AG04449 (cell line): ENCODE measurements at regions of chr19 and their contacts with region 1.

Region 1: DNA sequence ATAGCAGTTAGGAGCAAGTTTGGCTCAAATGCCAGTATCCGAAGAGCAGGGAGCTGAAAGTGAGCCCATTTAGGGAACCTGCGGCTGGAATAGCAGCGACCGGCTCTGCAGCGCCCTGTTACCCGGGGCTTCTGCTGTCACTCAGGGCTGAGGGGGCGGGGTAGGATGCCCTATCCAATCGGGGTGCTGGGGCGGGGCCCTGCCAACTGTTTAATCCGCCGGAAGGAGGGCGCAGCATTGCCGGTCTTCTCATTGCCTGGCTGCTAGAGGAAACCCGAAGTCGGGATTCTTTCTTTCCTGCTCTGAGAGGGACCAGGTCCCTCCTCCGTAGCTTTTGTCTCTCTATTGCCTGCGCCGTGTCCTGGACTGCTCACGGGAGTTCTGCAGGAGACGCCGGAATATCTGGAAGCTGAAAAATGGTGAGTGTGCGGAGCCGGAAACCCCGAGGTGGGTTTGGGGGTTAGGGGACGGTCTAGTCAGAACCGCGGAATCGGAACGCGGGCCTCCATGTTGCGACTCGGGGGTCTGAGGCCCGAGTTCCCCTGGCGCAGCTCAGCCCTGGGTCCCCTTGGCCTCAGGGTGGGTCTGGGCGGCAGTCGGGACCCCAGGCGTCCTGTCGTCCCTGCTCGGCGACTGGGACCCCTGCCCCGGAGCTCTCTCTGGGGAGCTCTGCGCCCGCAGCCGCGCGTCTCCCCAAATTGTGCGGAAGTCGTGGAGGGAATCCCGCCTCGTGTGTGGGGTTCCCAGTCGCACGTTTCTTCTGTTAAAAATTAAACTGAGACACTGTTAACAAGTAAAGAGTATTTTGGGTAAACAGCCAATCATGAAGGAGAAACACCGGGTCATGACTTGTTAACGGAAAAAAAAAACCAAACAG is 22.8 kb downstream of the ZNF763 start:
- DNase-seq: no peak
- H3K4me3 ChIP-seq: peak overlapping the region; percentile 92
- CTCF ChIP-seq: no peak

Region 2: DNA sequence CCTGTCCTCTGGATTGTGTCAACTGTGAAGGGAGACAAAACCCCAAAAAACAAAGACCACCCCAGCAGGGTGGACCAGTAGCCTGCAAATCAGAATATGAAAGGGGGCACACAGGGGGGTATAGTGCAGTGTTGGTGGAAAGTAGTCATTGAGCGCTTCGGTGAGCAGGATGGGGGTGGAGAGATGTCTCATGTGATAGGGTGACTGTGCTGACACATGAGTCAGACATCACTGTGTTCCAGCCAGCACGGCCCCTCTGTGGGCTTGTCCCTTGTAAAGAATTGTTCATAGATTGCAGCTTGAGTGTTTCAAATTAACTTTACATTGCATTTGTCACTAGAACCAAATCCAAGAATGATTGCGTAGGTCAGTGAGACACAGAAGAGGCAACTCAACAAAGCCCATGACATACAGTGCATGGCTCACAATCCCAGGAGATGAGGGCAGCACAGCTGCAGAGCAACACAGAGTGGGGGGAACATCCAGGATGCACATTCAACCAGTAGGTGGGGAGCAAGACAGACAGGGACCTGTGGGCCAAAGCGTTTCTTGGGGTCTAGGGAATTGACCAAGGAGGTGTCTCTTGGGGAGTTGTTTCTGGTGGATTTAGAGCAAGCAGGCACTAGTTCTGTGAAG is 166.1 kb before region 1 on chr19:
- CTCF ChIA-PET with region 1: no interaction called
- POLR2A ChIA-PET with region 1: no interaction called
- DNase-seq: no peak
- H3K4me3 ChIP-seq: no peak overlapping the region
- CTCF ChIP-seq: no peak

Region 3: DNA sequence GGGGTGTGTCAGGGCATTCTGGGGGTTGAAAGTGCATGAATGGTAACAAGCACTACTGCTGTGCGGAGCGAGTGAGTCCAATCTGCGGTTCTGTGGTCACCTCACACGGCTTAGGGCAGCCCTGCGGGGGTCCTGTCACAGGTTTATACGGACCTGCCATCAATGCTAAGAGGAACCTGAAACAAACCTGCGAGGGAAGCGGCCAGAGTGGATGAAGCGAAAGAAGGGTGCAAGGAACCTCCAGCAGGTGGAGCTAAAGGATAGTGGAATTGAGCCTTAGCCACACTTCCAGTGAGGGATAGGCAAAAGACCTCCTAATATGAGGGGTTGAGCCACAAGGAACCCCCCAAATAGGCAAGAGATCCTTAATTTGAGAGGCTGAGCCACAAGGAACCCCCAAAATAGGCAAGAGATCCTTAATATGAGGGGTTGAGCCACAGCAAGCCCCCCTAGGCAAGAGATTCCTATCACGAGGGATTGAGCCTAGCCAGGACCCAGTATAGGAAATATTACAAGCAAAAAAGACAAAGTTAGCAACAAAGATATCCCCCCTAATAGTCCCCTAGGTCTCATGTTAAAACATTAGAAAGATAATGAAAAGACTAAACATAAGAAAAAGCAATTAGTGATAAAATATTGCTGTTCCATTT is 106.4 kb before region 1 on chr19:
- CTCF ChIA-PET with region 1: interaction called, 79 read pairs
- POLR2A ChIA-PET with region 1: no interaction called
- DNase-seq: no peak
- H3K4me3 ChIP-seq: peak overlapping the region; percentile 15; the same call in 1 of the 2 replicates
- CTCF ChIP-seq: peak; percentile 72

Region 4: DNA sequence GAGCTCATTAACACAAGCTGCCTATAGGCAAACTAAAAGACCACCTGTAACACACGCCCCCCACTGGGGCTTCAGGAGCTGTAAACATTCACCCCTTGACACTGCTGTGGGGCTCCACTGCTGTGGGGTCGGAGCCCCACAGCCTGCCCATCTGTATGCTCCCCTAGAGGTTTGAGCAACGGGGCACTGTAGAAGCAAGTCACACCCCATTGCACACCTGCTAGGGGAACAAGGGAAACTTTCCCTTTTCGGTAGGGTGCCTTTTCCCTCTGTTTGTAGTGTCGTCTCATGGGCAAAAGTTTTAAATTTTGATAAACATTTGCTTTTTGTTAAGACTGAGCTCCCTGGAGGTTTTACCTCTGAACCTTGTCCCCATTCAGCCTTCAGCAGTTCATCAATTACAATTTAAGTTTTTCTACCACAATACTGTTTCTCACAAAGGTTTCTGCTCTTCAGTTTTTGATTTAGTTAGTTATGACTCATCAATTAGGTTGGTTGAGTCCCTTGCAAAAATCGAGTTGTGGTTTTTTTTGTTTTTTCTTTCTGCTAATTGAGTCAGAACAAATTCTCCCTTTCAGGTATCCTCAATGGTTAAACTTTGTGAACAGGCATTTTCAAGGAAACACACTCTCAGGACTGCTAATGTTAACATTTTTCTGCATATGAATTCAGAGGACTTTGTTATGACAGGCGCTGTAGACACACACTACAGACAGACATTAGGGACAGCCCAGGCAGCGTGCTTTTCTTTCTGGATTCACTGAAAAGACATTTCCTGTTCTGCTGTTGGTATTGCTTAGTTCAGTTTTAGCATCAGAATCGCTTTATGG is 12.7 kb after region 1 on chr19:
- CTCF ChIA-PET with region 1: interaction called, 24 read pairs
- POLR2A ChIA-PET with region 1: interaction called, 3 read pairs
- DNase-seq: no peak
- H3K4me3 ChIP-seq: no peak overlapping the region
- CTCF ChIP-seq: no peak

Region 5: DNA sequence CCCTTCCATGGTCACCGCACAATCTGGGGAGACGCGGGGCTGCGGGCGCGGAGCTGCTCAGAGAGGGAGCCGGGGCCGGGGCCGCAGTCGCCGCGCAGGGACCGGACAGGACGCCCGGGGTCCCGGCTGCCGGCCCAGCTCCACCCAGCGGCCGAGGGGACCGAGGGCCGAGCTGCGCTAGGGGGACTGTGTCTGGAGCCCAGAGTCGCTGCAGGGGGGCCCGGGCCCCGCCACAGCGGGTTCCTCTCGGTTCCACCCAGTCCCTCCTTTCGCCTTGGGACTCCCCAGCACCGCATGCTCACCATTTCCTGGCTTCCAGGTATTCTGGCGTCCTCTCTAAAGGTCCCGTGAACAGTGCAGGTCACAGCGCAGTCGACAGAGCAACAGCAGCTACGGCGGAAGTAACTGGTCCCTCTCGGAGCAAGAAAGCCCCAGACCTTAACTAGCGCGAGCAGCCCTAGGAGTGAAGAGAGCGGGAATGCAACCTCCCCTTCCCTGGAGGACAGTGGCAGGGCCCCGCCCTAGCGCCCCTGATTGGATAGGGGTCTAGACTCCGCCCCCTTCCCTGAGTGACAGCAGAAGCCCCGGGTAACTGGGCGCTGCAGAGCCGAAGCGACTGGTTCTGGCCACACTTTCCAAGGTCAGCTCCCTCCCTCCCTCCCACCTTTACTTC is 65.0 kb after region 1 on chr19 and contains the start of gene ZNF878:
- CTCF ChIA-PET with region 1: no interaction called
- POLR2A ChIA-PET with region 1: no interaction called
- DNase-seq: no peak
- H3K4me3 ChIP-seq: peak within 1 kb of the TSS; percentile 75
- CTCF ChIP-seq: no peak